Motor neuron (in vitro differentiated cells): ENCODE measurements at regions of chr4 and their contacts with region 1.

Region 1: GRCh38 chr4:71680706-71681105 is 103.2 kb downstream of the GC start:
- ATAC-seq: no peak
- H3K4me3 ChIP-seq: no peak overlapping the region
- H3K27ac ChIP-seq: no peak overlapping the region
- H3K4me1 ChIP-seq: no peaks in the 10 kb centered on the region

Region 2: DNA sequence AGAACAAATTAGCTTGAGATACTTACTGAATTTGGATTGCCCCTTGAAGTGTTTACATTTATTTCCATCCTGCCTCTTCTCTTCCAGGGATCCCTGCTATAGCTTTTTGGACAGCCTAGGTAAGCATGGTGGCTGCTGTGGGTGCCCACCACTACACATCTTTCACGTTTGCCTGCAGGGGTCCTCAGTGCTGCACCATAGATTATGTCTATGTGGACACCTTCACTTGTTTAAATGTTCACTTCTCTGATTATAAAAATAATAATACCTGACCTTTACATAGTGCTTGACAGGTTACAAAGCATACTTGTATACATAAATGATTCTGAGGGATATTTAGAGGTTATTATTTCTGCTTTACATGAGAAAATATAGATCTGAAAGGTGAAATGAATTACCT is 409.8 kb before region 1 on chr4:
- in situ Hi-C with region 1: loop called in 1 of 9 experiments (anchors 25 kb)
- ATAC-seq: peak in 3 of 8 experiments; percentile 37 to 55 (median 39)
- H3K4me3 ChIP-seq: no peak overlapping the region
- H3K27ac ChIP-seq: no peak overlapping the region
- H3K4me1 ChIP-seq: peaks cover 12 to 15% of the 10 kb centered on the region in 2 donors

Region 3: DNA sequence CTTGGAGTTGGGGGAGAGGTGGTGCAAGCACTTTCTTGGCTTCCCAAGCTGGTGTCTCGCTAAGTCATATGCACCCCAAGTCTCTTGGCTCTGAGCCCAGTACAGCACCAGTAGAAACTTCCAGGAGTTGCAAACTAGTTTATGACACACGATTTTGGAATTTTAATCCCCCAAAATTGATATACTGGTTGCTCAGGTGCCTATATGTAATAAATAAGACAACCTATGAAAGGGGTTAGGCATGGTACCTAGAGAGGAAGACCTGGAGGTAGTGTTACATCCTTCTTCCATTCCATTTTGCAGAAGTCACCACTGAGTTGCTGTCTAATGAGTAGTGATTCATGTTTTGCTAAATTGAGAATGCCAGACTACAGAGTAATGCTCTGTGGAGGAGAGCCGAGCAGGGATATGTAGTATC is 346.2 kb before region 1 on chr4:
- in situ Hi-C with region 1: no loop called
- ATAC-seq: no peak
- H3K4me3 ChIP-seq: no peak overlapping the region
- H3K27ac ChIP-seq: no peak overlapping the region
- H3K4me1 ChIP-seq: no peaks in the 10 kb centered on the region

Region 4: GRCh38 chr4:71498002-71498401 is 182.7 kb before region 1 on chr4:
- in situ Hi-C with region 1: no loop called
- ATAC-seq: no peak
- H3K4me3 ChIP-seq: no peak overlapping the region
- H3K27ac ChIP-seq: no peak overlapping the region
- H3K4me1 ChIP-seq: no peaks in the 10 kb centered on the region

Region 5: DNA sequence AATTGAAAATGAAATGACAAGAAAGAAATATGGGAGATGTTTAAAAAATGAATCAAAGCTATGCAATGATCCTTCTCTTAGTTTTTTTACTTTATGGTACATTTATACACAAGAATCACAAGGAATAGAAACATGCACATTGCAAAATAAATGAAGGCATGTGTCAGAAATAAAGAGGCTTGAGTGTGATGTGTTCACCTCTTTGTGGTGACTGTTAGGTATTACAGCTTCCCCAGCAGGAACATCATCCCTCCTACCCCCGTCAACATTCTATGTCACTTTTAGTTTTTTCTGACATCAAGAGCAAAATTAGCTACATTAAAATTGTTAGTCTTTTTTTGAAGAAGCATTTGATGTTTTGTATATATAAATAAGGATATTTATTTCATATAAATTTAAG is 127.1 kb before region 1 on chr4:
- in situ Hi-C with region 1: loop called in 1 of 9 experiments (anchors 25 kb)
- ATAC-seq: peak in 5 of 8 experiments; percentile 52 to 85 (median 63)
- H3K4me3 ChIP-seq: no peak overlapping the region
- H3K27ac ChIP-seq: no peak overlapping the region
- H3K4me1 ChIP-seq: no peaks in the 10 kb centered on the region

Region 6: DNA sequence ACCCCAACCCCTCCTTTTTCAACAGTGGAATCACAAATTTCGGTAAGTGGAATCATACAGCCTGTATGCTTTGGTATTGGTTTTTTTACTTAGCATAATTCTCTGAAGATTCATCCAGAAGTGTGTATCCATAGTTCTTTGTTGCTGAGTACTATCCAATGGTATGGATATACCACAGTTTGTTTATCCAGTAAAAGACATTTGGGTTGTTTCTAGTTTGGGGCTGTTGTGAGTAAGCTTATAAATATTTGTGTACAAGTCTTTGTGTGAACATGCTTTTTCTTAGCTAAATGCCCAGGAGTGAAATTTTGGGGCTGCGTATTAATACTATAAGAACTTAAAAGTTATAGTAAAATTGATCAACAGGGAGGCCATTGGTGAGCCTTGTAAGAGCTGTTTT is 160.6 kb after region 1 on chr4:
- in situ Hi-C with region 1: no loop called
- ATAC-seq: no peak
- H3K4me3 ChIP-seq: no peak overlapping the region
- H3K27ac ChIP-seq: no peak overlapping the region
- H3K4me1 ChIP-seq: no peaks in the 10 kb centered on the region

Region 7: DNA sequence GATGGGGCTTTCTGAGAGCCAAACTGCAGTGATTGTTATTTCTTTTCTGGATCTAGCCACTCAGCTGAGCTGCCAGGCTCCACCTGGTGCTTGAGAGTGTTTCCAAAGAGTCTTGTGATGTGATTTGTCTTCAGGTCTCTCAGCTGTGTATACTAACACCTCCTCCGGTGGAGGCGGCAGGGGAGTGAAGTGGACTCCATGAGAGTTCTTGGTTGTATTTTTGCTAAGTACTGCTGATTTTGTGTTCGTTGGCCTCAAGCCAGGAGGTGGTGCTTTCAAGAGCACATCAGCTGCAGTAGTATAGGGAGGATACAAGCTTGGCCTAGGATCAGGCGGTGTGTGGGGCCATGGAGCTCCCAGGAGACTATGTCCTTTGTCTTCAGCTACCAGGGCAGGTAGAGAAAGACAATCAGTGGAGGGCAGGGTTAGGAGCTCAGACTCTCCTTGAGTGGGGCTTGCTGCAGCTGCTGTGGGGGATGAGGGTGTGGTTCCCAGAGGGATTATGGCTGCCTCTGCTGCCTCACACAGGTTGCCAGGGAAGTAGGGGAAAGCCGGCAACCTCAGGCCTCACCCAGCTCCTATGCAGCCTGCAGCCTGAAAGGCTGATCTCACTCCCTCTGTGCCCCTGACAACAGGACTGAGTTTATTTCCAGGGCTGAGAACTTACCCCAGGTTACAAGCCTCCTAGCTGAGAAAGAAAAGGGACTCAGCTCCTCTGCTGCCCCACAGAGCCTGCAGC is 413.5 kb after region 1 on chr4:
- in situ Hi-C with region 1: no loop called
- ATAC-seq: peak in 4 of 8 experiments; percentile 21 to 55 (median 40)
- H3K4me3 ChIP-seq: no peak overlapping the region
- H3K27ac ChIP-seq: no peak overlapping the region
- H3K4me1 ChIP-seq: no peaks in the 10 kb centered on the region